Lower lobe of right lung (tissue), 2 donors: ENCODE measurements at regions of chr2 and their contacts with region 1.

Region 1: GRCh38 chr2:161586517-161587167 is 37.6 kb upstream of the SLC4A10 start:
- DNase-seq: no peak
- ATAC-seq: no peak
- H3K4me3 ChIP-seq: no peak overlapping the region
- H3K27ac ChIP-seq: no peak overlapping the region
- H3K4me1 ChIP-seq: no peaks in the 10 kb centered on the region
- H3K27me3 ChIP-seq: no peaks in the 10 kb centered on the region
- CTCF ChIP-seq: peak; percentile 54

Region 2: GRCh38 chr2:161946489-161947107 is 360.0 kb after region 1 on chr2:
- intact Hi-C with region 1: loop called (anchors 5 kb)
- DNase-seq: no peak
- ATAC-seq: no peak
- H3K4me3 ChIP-seq: no peak overlapping the region
- H3K27ac ChIP-seq: no peak overlapping the region
- H3K4me1 ChIP-seq: no peaks in the 10 kb centered on the region
- H3K27me3 ChIP-seq: no peaks in the 10 kb centered on the region
- CTCF ChIP-seq: peak; percentile 61